MCF 10A (cell line): ENCODE measurements at regions of chr6 and their contacts with region 1.

Region 1: GRCh38 chr6:109705258-109705657 is 14.2 kb downstream of the FIG4 start:
- DNase-seq: peak; percentile 88
- H3K4me3 Mint-ChIP-seq: no peak overlapping the region
- H3K27ac Mint-ChIP-seq: no peak overlapping the region
- H3K4me1 Mint-ChIP-seq: peaks cover 5% of the 10 kb centered on the region
- H3K27me3 Mint-ChIP-seq: no peaks in the 10 kb centered on the region
- CTCF ChIP-seq: peak; percentile 95

Region 2: DNA sequence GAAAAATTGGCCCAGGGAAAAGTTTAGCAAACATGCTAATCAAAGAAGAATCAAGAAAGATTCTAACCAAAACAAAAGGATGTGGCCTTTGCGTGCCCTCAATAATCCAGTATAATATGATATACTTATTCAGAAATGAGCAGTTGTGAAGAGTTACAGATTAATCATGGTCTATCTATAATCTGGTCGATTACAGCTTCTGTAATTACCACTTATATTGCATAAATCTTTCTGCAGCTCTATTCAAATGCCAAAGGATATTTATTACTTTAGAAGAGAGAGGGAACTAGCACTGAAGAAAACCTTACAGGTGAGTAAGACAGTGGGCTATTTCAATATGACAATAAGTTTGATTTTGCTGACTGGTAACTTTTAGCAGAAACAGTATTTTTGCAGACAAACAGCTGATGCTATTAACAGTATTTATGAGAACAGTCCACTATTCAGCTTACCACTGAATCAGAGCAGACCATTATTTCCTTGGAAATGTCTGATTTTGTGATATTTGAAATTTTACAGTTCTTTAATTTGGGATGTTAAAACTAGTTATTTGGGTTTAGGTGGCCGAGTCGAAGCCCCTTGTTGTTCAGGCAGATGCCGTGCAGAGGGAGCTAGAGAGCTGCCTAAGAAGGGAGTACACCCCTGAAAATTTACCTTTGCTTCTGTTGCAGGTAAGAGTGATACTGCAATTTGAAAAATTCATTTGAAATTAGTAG is 517.7 kb before region 1 on chr6:
- CTCF ChIA-PET with region 1: interaction called, 3 read pairs
- POLR2A ChIA-PET with region 1: no interaction called
- intact Hi-C with region 1: loop called (anchors 10 kb)
- DNase-seq: peak; percentile 68
- H3K4me3 Mint-ChIP-seq: no peak overlapping the region
- H3K27ac Mint-ChIP-seq: no peak overlapping the region
- H3K4me1 Mint-ChIP-seq: peaks cover 1% of the 10 kb centered on the region
- H3K27me3 Mint-ChIP-seq: peaks cover 50% of the 10 kb centered on the region
- CTCF ChIP-seq: peak; percentile 92

Region 3: GRCh38 chr6:109690737-109691621 is 14.3 kb before region 1 on chr6 and contains the starts of genes AK9 and FIG4:
- CTCF ChIA-PET with region 1: interaction called, 24 read pairs
- POLR2A ChIA-PET with region 1: interaction called, 4 read pairs
- intact Hi-C with region 1: no loop called
- DNase-seq: peak; percentile 96
- H3K4me3 Mint-ChIP-seq: peak within 1 kb of the TSS; percentile 91
- H3K27ac Mint-ChIP-seq: peak within 1 kb of the TSS; percentile 96
- H3K4me1 Mint-ChIP-seq: peaks cover 12% of the 10 kb centered on the region
- H3K27me3 Mint-ChIP-seq: no peaks in the 10 kb centered on the region
- CTCF ChIP-seq: peak; percentile 18
- total RNA-seq, gene AK9: 4.7 and 7.5 TPM in 2 replicates
- total RNA-seq, gene FIG4: 7.9 and 9.5 TPM in 2 replicates

Region 4: DNA sequence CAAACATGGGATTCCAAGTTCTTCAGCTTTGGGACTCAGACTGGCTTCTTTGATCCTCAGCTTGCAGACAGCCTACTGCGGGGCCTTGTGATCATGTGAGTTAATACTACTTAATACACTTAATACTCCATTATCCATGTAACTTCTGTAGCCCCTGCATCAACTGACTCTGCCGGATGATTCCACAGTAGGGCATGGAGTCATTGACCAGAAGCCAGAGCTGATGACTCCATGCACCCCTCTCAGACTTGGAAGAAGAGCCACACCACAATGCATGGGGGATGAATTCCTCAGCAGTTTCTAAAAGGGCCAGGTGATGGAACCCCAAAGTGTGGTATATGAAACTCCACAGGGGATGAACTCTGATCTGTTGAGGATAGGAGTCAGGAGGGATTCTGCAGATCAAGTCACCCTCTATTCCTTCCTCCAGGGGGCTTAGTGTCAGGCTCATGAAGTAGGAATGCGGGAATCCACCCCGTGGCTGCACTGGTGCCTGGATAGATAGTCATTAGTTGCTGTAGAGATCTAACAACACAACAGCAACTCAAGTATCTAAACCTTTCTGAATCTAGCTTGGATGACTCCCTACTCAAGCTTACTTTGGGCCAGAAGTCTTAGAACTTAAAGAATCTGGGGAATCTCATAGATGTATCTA is 343.1 kb after region 1 on chr6:
- CTCF ChIA-PET with region 1: interaction called, 337 read pairs
- POLR2A ChIA-PET with region 1: no interaction called
- intact Hi-C with region 1: loop called (anchors 1 kb)
- DNase-seq: no peak
- H3K4me3 Mint-ChIP-seq: no peak overlapping the region
- H3K27ac Mint-ChIP-seq: no peak overlapping the region
- H3K4me1 Mint-ChIP-seq: no peaks in the 10 kb centered on the region
- H3K27me3 Mint-ChIP-seq: no peaks in the 10 kb centered on the region
- CTCF ChIP-seq: no peak

Region 5: DNA sequence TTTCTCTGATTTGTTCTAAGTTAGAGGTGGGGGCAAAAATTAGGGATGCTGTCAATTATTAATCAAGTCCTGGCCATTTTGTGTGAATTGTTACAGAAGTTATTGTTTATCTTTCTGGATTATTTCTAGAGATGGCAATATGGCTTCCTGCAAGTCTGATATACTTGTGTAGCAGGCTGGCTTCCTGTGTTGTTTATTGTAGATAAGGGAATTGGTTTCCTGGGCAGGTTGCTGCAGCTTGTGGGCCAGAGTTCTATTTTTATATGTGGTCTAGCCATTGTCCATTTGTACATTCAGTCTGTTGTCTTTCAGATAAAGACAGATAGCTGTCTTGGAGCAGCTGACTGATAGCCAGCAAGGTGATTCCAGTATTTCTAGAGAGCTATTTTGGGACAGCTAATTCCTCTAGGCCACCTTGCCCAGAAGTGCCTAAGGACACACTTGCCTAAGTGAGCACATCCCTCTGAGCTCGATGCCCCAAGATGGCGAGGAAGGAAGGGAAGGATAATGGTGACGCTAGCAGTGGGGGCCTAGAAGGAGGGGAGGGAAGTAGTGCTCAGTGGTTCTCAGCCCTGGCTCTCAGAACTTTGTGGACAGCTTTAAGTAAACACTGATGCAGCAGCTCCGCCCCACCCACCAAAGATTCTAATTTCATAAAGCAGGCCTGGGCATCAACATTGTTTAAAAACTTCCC is 684.6 kb after region 1 on chr6:
- CTCF ChIA-PET with region 1: interaction called, 37 read pairs
- POLR2A ChIA-PET with region 1: no interaction called
- intact Hi-C with region 1: loop called (anchors 1 kb)
- DNase-seq: no peak
- H3K4me3 Mint-ChIP-seq: no peak overlapping the region
- H3K27ac Mint-ChIP-seq: no peak overlapping the region
- H3K4me1 Mint-ChIP-seq: no peaks in the 10 kb centered on the region
- H3K27me3 Mint-ChIP-seq: no peaks in the 10 kb centered on the region
- CTCF ChIP-seq: no peak